Mammary epithelial cell (primary cell): ENCODE measurements at regions of chr9 and their contacts with region 1.

Region 1: DNA sequence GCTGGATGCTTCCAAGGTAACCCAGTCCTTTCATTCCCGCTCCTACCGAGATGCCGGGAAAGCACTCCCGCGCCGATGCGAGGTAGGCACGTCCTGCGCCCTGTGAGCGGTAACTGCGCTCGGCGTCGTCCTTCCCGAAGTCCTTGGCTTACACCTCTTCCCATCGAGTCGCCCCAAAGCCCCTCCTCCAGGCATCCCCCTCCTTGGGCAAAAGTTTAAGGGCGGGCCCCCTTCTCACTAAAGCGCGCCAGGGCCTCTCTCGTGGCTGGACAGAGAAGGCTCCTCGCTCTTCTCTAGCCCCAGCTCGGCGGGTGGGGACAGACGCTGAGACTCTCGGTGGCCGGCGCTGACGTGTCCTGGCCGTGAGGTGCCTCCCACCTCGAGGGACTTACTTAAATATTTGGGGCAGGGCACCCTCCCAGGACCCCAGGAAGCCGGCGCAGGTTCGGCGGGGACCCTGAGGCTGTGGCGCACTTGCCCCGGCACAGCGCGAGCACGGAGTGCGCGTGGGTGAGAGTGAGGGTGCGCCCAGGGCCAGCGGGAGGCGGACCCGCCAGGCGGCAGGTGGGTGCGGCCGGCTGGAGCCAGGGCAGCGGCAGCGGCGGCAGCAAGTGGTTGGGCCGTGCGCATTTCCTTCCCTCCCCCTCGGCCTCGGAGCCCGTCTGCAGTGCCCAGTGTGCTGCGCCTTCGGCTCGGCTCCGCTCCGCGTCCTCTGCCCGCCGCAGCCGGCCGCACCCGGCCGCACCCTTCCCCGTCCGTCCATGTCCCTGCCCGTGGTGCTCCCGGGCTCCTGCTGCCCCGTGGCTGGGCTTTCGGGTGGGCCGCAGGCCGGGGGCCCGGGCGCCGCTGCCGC is at the start of gene ENTREP1:
- DNase-seq: peak; percentile 75
- H3K4me3 ChIP-seq: peak within 1 kb of the TSS; percentile 54 to 69 (median 61)
- H3K27ac ChIP-seq: no peak within 1 kb of the TSS
- H3K4me1 ChIP-seq: peaks cover 13% of the 10 kb centered on the region
- H3K27me3 ChIP-seq: no peaks in the 10 kb centered on the region
- CTCF ChIP-seq: peak in 1 of 2 donors; percentile 45
- total RNA-seq, gene ENTREP1: 6.2 to 12.5 TPM

Region 2: DNA sequence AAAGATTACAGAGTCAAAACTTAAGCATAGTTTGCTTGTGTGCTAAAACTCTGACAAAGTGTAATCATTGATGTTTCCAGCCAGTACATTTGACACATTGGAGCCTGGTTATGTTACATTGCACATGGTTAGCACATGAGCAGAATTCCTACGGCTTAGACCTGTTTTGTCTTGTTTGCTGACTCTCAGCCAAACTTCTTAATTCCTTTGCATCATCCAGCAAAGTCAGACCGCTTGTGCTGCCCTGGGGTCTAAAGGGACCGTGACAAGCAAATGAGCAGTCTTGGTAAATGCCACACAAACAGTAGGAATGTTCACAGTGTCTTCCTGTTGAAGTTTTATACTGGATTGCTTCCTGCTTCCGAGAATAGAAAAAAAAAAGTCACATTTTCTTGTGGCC is 71.7 kb before region 1 on chr9:
- CTCF ChIA-PET with region 1: no interaction called
- dilution Hi-C with region 1: no loop called
- in situ Hi-C with region 1: no loop called
- intact Hi-C with region 1: loop called (anchors 2 kb)
- DNase-seq: peak; percentile 72
- H3K4me3 ChIP-seq: no peak overlapping the region
- H3K27ac ChIP-seq: no peak overlapping the region
- H3K4me1 ChIP-seq: peaks cover 12% of the 10 kb centered on the region
- H3K27me3 ChIP-seq: no peaks in the 10 kb centered on the region
- CTCF ChIP-seq: no peak

Region 3: DNA sequence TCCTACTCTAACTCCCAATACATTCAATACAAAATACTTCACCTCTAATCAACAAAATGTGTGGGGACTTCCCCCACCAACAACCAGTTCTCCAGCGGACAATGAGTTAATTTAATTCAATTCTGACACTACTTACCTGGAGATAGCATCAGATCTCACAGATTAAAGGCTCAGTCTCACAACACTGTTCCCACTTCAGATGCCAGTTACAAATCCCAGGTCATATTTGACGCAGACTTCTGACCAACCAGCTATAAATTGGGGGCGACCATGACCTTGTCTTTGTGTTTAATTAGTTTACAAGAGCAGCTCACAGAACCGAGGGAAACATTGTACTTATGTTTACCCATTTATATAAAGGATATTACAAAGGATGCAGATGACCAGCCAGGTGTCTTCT is 36.7 kb before region 1 on chr9:
- CTCF ChIA-PET with region 1: no interaction called
- dilution Hi-C with region 1: loop called (anchors 5 kb)
- in situ Hi-C with region 1: no loop called
- intact Hi-C with region 1: no loop called
- DNase-seq: no peak
- H3K4me3 ChIP-seq: no peak overlapping the region
- H3K27ac ChIP-seq: no peak overlapping the region
- H3K4me1 ChIP-seq: no peaks in the 10 kb centered on the region
- H3K27me3 ChIP-seq: no peaks in the 10 kb centered on the region
- CTCF ChIP-seq: no peak

Region 4: DNA sequence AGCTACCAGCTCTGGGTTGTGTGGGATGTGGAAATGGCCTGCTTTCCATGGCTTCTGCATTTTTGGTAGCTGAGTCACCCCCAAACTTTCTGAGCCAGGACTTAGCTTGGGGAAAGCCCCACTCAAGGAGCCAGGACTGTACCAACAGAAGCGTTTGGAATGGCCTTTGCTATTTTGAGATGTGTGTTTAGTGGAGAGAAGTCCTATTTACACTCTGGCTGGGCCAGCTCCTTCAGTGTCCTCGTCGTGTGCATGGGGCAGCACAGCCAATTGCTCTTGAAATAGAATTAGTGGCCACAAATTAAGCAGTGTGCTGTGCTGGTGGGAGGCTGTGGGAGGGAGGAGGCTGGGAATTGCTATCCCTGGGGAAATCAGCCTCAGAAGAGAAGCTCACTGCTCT is 51.9 kb after region 1 on chr9:
- CTCF ChIA-PET with region 1: no interaction called
- dilution Hi-C with region 1: no loop called
- in situ Hi-C with region 1: no loop called
- intact Hi-C with region 1: loop called (anchors 2 kb)
- DNase-seq: peak; percentile 83
- H3K4me3 ChIP-seq: no peak overlapping the region
- H3K27ac ChIP-seq: no peak overlapping the region
- H3K4me1 ChIP-seq: peaks cover 46% of the 10 kb centered on the region
- H3K27me3 ChIP-seq: no peaks in the 10 kb centered on the region
- CTCF ChIP-seq: no peak

Region 5: DNA sequence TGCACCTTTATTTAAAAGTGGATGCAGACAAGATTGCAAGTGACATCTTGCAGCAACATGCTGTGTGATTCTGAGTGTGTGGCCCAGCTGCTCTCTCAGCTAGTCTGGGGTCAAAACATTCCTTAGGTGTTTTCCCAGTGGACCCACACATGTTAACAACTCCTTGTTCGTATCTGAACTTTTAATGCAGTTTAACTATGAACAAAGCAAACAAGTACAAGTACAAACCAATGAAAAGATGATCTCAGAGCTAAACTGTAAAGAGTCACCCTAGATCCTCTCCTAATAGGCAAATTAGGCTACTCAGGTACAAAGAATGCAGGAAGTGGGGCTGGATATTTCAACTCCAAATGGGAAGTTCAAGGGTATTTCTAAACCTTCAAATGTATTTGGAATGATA is 108.6 kb after region 1 on chr9:
- CTCF ChIA-PET with region 1: no interaction called
- dilution Hi-C with region 1: no loop called
- in situ Hi-C with region 1: no loop called
- intact Hi-C with region 1: no loop called
- DNase-seq: peak; percentile 44
- H3K4me3 ChIP-seq: no peak overlapping the region
- H3K27ac ChIP-seq: no peak overlapping the region
- H3K4me1 ChIP-seq: peaks cover 9% of the 10 kb centered on the region
- H3K27me3 ChIP-seq: no peaks in the 10 kb centered on the region
- CTCF ChIP-seq: no peak